Motor neuron (in vitro differentiated cells): ENCODE measurements at regions of chr7 and their contacts with region 1.

Region 1: DNA sequence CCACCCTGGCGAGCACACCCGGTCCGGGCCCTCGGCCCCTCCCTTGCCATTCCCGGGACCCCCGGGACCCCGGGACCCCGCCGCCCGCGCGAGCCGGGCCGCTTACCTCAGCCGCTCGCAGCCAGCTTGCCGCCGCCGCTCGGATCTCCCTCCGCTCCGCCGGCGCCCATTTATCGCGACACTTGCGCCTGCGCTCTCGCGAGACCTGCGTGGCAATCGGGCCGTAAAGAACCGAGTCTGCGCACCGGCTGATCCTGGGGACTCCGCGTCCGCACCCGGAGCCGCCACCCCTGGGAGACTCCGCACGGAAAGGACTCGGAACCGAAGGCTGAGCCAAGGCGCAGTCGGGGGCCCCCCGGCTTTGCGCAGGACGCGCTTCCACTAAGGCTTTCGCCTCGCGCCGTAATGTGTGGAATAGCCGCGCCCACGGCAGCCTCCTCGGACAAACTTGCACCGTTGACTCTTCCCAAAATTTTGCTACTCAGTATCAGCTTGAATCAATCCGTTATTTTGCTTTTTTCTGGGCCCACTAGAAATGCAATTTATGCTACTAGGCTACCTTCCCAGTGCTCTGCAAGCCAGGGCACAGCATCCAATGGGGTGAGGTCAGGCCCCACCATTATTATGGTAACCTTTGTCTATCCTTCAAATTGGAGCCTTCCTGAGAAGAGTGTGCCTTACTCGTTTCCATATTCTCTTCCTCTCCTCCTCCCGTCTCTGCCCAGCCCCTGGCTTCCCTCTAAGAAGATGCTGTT is at the start of gene MAD1L1:
- ATAC-seq: peak; percentile 84 to 96 (median 92)
- H3K4me3 ChIP-seq: peak within 1 kb of the TSS; percentile 65 to 92 (median 87)
- H3K27ac ChIP-seq: peak within 1 kb of the TSS; percentile 62 to 67
- H3K4me1 ChIP-seq: peaks cover 3 to 6% of the 10 kb centered on the region in 2 donors
- total RNA-seq, gene MAD1L1: 24.0 to 68.8 (median 32.4) TPM

Region 2: GRCh38 chr7:1664711-1665548 is 568.0 kb before region 1 on chr7:
- in situ Hi-C with region 1: loop called in 1 of 9 experiments (anchors 25 kb)
- ATAC-seq: peak; percentile 13 to 62 (median 42)
- H3K4me3 ChIP-seq: peak overlapping the region; percentile 54 to 96 (median 83)
- H3K27ac ChIP-seq: peak overlapping the region; percentile 76 to 94
- H3K4me1 ChIP-seq: peaks cover 21 to 26% of the 10 kb centered on the region in 2 donors